Activated T-helper 1 cell treated with anti-CD3 and anti-CD28 coated beads, Interleukin-12 subunit alpha, Interleukin-12 subunit beta, Interleukin-2, Interleukin-4 antibody, amounts not matched to agents 30 ng/mL and 10 ng/mL and 1 ng/mL, durations not matched to agents 14 hours and 24 hours and 36 hours (primary cell): ENCODE measurements at regions of chr7 and their contacts with region 1.

Region 1: GRCh38 chr7:20786779-20787659 is at the start of gene SP8:
- DNase-seq: no peak
- H3K4me3 Mint-ChIP-seq: peak within 1 kb of the TSS; percentile 39
- H3K27ac Mint-ChIP-seq: peak within 1 kb of the TSS; percentile 83
- H3K4me1 Mint-ChIP-seq: peaks cover 21% of the 10 kb centered on the region
- H3K27me3 Mint-ChIP-seq: peaks cover 74% of the 10 kb centered on the region
- total RNA-seq, gene SP8: not detected in 2 replicates

Region 2: GRCh38 chr7:20798081-20798693 is 11.2 kb after region 1 on chr7:
- intact Hi-C with region 1: loop called (anchors 1 kb)
- DNase-seq: no peak
- H3K4me3 Mint-ChIP-seq: no peak overlapping the region
- H3K27ac Mint-ChIP-seq: no peak overlapping the region
- H3K4me1 Mint-ChIP-seq: peaks cover 11% of the 10 kb centered on the region
- H3K27me3 Mint-ChIP-seq: peaks cover 57% of the 10 kb centered on the region

Region 3: DNA sequence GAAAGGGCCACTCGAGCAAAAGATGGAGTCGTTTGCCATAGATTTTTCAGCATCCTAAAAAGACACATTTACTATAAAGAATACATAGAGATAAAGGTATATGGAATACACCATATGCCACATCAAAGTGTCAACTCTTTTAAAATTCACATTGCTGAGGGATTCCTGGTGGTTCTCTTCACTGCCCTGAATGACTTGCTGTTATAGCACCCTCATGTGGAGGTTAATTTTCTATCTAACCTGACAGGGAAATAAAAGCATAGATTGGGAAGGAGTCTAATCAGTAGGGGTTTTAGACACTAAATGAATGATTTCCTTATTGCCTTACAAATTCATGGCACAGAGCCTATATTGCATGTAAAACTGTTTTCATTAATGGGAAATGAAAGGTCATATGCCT is 781.7 kb after region 1 on chr7:
- intact Hi-C with region 1: no loop called
- DNase-seq: no peak
- H3K4me3 Mint-ChIP-seq: no peak overlapping the region
- H3K27ac Mint-ChIP-seq: no peak overlapping the region
- H3K4me1 Mint-ChIP-seq: no peaks in the 10 kb centered on the region
- H3K27me3 Mint-ChIP-seq: peaks cover 3% of the 10 kb centered on the region